Endothelial cell of umbilical vein (primary cell): ENCODE measurements at regions of chr2 and their contacts with region 1.

Region 1: GRCh38 chr2:218387374-218388194 is 5.5 kb downstream of the SLC11A1 start:
- DNase-seq: peak; percentile 76
- H3K4me3 ChIP-seq: peak overlapping the region; percentile 16 to 46 (median 29)
- H3K27ac ChIP-seq: no peak overlapping the region
- H3K4me1 ChIP-seq: peaks cover 3% of the 10 kb centered on the region
- H3K27me3 ChIP-seq: peaks cover 0 to 2% of the 10 kb centered on the region in 2 experiments
- CTCF ChIP-seq: no peak
- POLR2A ChIP-seq: no peak

Region 2: DNA sequence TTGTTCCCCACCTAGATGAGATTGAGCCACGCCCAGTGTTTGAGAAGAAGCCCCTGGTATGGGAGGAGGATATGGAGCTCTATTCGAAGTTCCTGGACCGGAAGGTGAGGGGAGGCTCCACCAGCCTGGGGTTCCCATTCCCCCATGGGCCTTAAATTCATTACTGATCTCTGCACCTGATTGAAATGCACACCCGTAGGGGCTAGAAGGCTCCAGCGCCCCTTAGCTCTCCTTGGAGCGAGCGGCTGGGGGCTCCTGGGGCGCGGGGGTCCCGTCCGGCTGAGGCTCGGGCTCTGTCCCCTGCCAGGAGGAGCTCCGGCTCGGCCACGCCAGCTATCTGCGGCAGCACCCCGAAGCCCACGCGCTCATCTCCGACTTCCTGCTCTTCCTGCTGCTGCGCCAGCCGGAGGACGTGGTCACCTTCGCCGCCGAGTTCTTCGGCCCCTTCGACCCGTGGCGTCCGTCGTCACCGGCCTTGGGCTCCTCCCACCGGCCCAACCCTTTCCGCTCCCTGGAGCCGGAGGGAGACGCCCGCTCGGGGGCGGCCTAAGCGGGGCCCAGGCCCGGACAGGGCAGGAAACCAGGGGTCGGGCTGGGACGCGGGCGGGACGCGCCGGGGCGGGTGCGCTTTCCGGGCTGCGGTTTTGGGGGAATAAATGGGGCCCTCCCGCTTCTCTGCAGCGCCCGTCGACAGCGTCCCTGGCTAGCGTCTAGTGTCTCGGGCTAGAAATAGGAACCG is 20.0 kb before region 1 on chr2:
- CTCF ChIA-PET with region 1: interaction called, 5 read pairs
- POLR2A ChIA-PET with region 1: no interaction called
- dilution Hi-C with region 1: no loop called
- intact Hi-C with region 1: loop called (anchors 2 kb)
- DNase-seq: peak; percentile 53
- H3K4me3 ChIP-seq: peak overlapping the region; percentile 14 to 41 (median 34)
- H3K27ac ChIP-seq: no peak overlapping the region
- H3K4me1 ChIP-seq: no peaks in the 10 kb centered on the region
- H3K27me3 ChIP-seq: no peaks in the 10 kb centered on the region
- CTCF ChIP-seq: no peak
- POLR2A ChIP-seq: peak; percentile 71